ENCODE measurements at regions of chr14 and their contacts with region 1.

Region 1: DNA sequence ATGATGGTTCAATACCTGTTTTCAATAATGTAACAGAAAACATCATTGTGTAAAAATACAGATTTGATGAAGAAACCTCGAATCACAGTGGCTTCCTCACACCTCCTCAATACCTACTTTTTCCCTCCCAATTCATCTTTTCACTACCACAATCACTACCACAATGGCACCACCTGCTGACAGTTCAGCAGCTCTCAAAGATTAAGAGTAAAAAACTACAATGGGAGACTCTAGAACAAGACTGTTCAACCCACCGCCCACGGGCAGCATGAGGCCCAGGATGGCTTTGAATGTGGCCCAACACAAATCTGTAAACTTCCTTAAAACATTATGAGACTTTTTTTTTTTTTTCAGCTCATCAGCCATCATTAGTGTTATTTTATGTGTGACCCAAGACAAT is 15.2 kb downstream of the MED6 start:
- DNase-seq: no peak
- H3K4me3 ChIP-seq: no peak overlapping the region
- H3K27ac ChIP-seq: no peak overlapping the region
- H3K4me1 ChIP-seq: no peaks in the 10 kb centered on the region
- H3K27me3 ChIP-seq: no peaks in the 10 kb centered on the region
- CTCF ChIP-seq: no peak
- POLR2A ChIP-seq: no peak

Region 2: DNA sequence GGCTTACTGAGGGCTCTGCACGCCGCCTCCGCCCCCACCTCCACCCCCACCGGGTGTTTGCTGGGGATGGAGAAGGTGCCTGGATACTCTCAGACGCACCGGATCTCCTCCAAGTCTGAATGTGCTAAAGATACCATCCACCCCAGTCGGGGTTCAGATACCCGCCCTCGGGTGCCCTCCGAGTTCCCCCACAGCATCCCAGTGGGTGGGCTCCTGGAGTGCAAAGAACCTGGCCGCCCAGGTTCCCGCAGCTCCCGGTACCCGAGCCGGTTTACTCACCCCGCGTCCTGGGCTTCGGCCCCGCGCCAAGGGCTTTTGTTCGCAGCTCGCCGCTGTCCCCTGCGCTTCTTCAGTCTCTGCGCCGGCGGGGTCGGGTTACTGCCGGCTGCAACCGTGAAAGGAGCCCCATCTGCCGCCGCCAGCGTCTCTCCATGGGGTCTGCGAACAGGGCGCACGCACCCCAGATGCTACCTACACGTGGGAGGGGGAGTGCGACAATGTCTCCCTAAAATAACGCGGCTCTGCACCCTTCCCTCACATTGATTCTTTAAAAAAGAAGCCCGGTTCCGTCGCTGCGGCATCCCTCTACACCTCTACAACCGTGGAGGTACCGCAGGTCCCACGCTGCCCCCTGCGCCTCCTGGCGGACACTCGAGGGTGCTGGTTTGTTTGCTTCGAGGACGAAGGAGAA is 1010.8 kb before region 1 on chr14 and contains the start of gene CCDC177:
- intact Hi-C with region 1: loop called (anchors 10 kb)
- DNase-seq: no peak
- H3K4me3 ChIP-seq: peak within 1 kb of the TSS; percentile 27 to 53
- H3K27ac ChIP-seq: no peak within 1 kb of the TSS
- H3K4me1 ChIP-seq: peaks cover 27% of the 10 kb centered on the region
- H3K27me3 ChIP-seq: no peaks in the 10 kb centered on the region
- CTCF ChIP-seq: peak in 2 of 3 experiments; percentile 60 to 74
- POLR2A ChIP-seq: no peak
- total RNA-seq, gene CCDC177: not detected

Region 3: GRCh38 chr14:70622111-70622712 is 37.0 kb after region 1 on chr14:
- intact Hi-C with region 1: loop called (anchors 2 kb)
- DNase-seq: no peak
- H3K4me3 ChIP-seq: no peak overlapping the region
- H3K27ac ChIP-seq: no peak overlapping the region
- H3K4me1 ChIP-seq: no peaks in the 10 kb centered on the region
- H3K27me3 ChIP-seq: no peaks in the 10 kb centered on the region
- CTCF ChIP-seq: peak in 1 of 3 experiments; percentile 43
- POLR2A ChIP-seq: no peak

Measured in vagina (tissue), 2 donors.